ENCODE measurements at regions of chr13 and their contacts with region 1.

Region 1: DNA sequence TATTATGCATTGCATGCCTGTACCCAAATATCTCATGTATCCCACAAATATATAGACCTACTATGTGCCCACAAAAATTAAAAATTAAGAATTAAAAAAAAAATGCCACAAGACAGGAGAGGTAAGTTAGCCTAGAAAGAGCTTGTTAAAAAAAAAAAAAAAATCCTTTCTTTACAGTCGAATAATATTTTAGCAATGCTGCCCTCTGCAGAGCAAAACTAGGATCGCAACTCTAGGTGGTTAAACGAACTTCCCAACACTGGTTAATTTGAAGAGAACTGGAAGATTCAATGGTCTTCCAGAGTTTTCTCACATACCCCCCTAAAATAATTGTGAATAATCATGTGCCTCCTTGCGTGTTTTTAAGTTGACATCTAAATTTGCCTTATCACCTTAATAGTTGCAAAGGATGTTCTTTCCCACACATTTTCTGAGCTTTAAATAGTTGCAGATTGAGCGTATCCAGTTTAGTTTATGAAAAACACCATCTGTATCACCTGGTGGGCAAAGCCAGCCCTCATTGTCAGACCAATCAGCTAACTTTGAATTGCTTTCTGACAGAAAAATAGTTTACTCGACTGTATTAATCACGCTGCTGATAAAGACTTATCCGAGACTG is 47.4 kb upstream of the RCBTB2 start:
- DNase-seq: peak; percentile 11
- H3K4me3 ChIP-seq: no peak overlapping the region
- H3K27ac ChIP-seq: no peak overlapping the region
- H3K27me3 ChIP-seq: peaks cover 12% of the 10 kb centered on the region
- CTCF ChIP-seq: peak; percentile 73

Region 2: DNA sequence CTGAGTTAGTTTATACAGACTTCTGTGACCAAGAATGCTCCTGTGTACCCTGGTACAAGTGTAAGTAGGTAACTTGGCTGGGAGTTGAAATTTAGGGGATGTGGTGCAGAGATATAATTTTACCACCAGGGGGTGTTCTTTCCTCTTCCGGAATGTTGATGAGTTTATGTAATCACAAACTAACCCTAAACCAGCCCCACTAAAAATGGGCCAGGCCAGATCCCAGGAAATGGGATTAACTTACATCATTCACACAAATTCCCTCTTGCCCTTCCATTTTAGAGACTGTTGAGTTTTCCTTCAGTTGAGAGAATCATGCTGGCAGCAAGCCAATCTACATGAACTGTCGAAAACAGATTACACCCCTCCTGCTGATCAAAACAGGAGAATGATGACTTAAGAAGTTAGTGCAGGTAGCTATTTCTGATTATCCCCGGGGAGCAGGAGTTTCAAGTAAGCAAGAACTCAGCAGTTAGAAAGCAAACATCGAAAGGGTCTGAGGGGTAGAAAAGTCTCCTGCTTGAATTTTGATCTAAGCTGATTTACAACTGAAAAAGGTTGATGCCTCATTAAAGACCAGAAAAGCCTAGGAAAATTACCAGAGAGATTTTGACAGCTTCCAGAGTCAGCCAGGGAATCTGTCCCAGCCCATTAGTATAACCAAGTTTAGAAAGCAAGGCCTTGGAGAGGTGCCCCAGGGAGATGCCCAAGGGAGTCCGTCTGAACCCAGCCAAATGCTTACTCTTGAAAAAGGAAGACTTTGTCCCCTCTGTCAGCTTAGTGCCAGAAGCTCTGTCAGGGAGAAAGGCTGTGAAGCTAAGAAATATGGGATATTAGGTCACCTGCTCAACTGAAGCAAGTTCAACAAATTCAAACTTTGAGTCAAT is 453.1 kb before region 1 on chr13:
- CTCF ChIA-PET with region 1: interaction called, 29 read pairs
- POLR2A ChIA-PET with region 1: no interaction called
- DNase-seq: no peak
- H3K4me3 ChIP-seq: no peak overlapping the region
- H3K27ac ChIP-seq: no peak overlapping the region
- H3K27me3 ChIP-seq: peaks cover 5% of the 10 kb centered on the region
- CTCF ChIP-seq: peak; percentile 75

Region 3: DNA sequence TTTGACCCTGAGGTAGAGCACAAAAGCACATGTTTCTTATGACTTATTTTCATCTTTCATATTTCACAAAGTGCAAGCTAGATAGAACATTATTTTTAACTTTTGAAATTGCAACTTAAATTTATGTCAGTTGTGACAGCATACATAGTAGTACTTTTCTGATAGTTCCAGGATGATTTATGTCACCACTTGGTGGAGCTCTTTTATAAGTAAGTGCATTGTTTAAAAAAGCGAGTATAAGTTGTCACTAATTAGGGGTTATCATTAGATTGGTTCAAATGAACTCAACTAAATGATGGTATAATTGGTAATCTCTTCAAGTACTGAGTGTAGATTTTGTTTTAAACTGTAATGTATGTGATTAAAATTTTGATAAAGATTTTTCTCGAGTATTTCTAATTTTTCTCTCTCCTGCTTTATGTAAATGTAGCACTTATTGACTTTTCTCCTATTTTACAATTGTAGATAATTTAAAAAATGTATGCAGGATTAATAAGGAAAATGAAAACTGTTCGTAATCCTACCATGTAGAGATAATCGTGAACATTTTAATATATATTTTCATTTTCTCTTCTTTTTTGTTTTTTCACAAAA is 245.7 kb before region 1 on chr13:
- CTCF ChIA-PET with region 1: interaction called, 182 read pairs
- POLR2A ChIA-PET with region 1: interaction called, 3 read pairs
- DNase-seq: no peak
- H3K4me3 ChIP-seq: no peak overlapping the region
- H3K27ac ChIP-seq: no peak overlapping the region
- H3K27me3 ChIP-seq: no peaks in the 10 kb centered on the region
- CTCF ChIP-seq: peak; percentile 54

Region 4: DNA sequence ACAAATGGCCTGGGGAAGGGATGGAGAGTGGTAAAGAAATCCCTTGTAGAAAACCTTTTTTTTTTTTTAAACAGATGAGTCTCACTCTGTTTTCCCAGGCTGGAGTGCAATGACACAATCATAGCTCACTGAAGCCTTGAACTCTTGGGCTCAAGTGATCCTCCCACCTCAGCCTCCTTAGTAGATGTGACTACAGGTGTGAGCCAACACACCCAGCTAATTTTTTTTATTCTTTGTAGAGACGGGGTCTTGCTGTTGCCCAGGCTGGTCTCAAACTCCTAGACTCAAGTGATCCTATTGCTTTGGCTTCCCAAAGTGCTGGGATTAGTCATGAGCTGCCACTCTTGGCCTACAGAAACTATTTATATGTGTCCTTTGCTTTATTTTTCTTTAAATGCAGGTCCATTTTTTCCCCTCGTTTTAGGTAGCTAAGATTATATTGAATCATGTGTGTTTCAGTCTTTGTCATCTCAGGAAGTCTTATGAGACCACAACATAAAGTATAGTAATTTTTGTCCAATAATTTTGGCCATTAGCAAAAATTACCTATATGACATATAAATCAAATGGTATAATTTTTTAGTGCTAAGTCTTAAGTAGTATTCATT is 177.9 kb before region 1 on chr13:
- CTCF ChIA-PET with region 1: interaction called, 11 read pairs
- POLR2A ChIA-PET with region 1: no interaction called
- DNase-seq: no peak
- H3K4me3 ChIP-seq: no peak overlapping the region
- H3K27ac ChIP-seq: no peak overlapping the region
- H3K27me3 ChIP-seq: no peaks in the 10 kb centered on the region
- CTCF ChIP-seq: no peak

Region 5: GRCh38 chr13:48505597-48506091 is 74.7 kb before region 1 on chr13:
- CTCF ChIA-PET with region 1: no interaction called
- POLR2A ChIA-PET with region 1: no interaction called
- DNase-seq: peak; percentile 8
- H3K4me3 ChIP-seq: no peak overlapping the region
- H3K27ac ChIP-seq: peak overlapping the region; percentile 47
- H3K27me3 ChIP-seq: no peaks in the 10 kb centered on the region
- CTCF ChIP-seq: no peak

Region 6: GRCh38 chr13:48542581-48543341 is 37.5 kb before region 1 on chr13:
- CTCF ChIA-PET with region 1: interaction called, 11 read pairs
- POLR2A ChIA-PET with region 1: interaction called, 3 read pairs
- DNase-seq: no peak
- H3K4me3 ChIP-seq: no peak overlapping the region
- H3K27ac ChIP-seq: no peak overlapping the region
- H3K27me3 ChIP-seq: no peaks in the 10 kb centered on the region
- CTCF ChIP-seq: peak; percentile 25

Region 7: DNA sequence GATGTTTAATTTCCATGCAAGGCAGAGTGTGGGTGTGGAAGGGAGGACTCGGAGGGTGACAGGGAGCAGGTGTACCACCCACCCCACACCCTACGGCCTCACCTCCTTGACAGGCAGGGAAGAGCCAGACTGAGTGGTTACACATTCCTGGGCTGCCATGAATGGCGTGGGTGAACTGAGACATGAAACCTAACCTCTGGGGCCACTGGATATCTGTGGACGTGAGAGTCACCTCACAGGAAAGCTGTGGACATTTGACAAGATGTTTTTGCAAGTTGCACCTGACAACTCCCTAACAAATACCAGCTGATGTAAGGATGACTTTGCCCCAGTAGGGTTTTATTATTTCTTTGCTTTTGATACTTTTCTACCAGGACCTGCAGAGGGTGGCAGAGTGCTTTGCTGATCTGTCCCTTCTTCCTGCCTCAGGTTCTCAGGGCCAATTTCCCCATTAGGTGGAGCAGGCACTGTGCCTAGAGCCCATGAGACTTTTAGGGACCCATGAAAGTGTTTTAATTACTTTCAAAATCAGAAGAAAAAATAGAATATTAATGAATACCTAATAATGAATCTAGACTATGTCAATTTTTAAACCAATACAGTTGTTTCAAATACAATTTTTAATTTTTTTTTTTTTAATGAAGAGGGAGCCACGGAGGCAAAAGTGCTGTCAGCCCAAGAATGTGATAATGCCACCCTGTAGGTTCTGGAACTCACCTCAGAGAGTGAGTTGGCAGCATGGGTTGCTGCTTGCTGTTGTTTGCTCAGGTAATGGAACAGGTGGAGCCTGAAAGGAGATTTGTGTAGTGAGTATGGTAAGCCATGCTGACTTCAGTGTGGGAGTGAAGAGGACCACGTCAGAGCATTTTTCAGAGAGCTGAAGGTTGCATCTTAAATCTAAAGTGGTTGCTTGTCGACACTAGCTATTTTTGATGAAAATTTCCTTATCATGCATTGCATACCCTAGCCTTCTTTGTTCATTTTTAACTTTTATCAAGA is 15.4 kb after region 1 on chr13:
- CTCF ChIA-PET with region 1: interaction called, 20 read pairs
- POLR2A ChIA-PET with region 1: interaction called, 6 read pairs
- DNase-seq: peak; percentile 26
- H3K4me3 ChIP-seq: no peak overlapping the region
- H3K27ac ChIP-seq: no peak overlapping the region
- H3K27me3 ChIP-seq: peaks cover 10% of the 10 kb centered on the region
- CTCF ChIP-seq: peak; percentile 76

Region 8: GRCh38 chr13:49140910-49141611 is 560.8 kb after region 1 on chr13:
- CTCF ChIA-PET with region 1: no interaction called
- POLR2A ChIA-PET with region 1: no interaction called
- DNase-seq: no peak
- H3K4me3 ChIP-seq: no peak overlapping the region
- H3K27ac ChIP-seq: no peak overlapping the region
- H3K27me3 ChIP-seq: no peaks in the 10 kb centered on the region
- CTCF ChIP-seq: no peak

Measured in AG04450 (cell line).